ENCODE measurements at regions of chr1 and their contacts with region 1.

Region 1: DNA sequence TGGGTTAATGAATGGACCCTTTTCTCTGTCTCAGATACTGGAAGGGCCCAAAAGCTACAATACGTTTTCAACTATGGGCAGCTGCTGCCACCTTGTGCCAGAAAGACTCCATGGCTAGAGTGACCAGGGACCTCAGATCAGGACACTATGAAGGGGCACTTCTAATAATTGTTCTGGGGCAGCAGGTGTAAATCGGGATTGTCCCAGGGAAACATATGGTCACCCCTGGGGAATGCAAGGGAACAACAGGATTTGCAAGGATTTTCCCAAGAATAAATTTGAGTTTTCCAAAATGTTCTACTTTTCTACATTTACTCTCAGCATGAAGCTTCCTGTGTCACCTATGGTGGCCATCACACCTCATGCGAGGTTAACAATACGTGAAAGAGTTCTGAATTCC is 12.0 kb upstream of the FCAMR start:
- DNase-seq: peak; percentile 81
- H3K4me3 Mint-ChIP-seq: no peak overlapping the region
- H3K27ac Mint-ChIP-seq: no peak overlapping the region
- H3K4me1 Mint-ChIP-seq: no peaks in the 10 kb centered on the region
- H3K27me3 Mint-ChIP-seq: no peaks in the 10 kb centered on the region
- CTCF ChIP-seq: peak; percentile 99

Region 2: GRCh38 chr1:206489980-206490770 is 492.0 kb before region 1 on chr1:
- CTCF ChIA-PET with region 1: interaction called, 14 read pairs
- POLR2A ChIA-PET with region 1: no interaction called
- intact Hi-C with region 1: loop called (anchors 2 kb)
- DNase-seq: peak; percentile 89
- H3K4me3 Mint-ChIP-seq: no peak overlapping the region
- H3K27ac Mint-ChIP-seq: no peak overlapping the region
- H3K4me1 Mint-ChIP-seq: no peaks in the 10 kb centered on the region
- H3K27me3 Mint-ChIP-seq: no peaks in the 10 kb centered on the region
- CTCF ChIP-seq: peak; percentile 100

Region 3: GRCh38 chr1:206635080-206635977 is 346.9 kb before region 1 on chr1 and contains the start of gene DYRK3:
- CTCF ChIA-PET with region 1: interaction called, 80 read pairs
- POLR2A ChIA-PET with region 1: interaction called, 14 read pairs
- intact Hi-C with region 1: loop called (anchors 1 kb)
- DNase-seq: peak; percentile 99
- H3K4me3 Mint-ChIP-seq: peak within 1 kb of the TSS; percentile 89
- H3K27ac Mint-ChIP-seq: peak within 1 kb of the TSS; percentile 82
- H3K4me1 Mint-ChIP-seq: peaks cover 38% of the 10 kb centered on the region
- H3K27me3 Mint-ChIP-seq: no peaks in the 10 kb centered on the region
- CTCF ChIP-seq: no peak
- total RNA-seq, gene DYRK3: 45.4 and 58.5 TPM in 2 replicates

Region 4: GRCh38 chr1:206744683-206745082 is 237.5 kb before region 1 on chr1:
- CTCF ChIA-PET with region 1: interaction called, 18 read pairs
- POLR2A ChIA-PET with region 1: no interaction called
- intact Hi-C with region 1: no loop called
- DNase-seq: no peak
- H3K4me3 Mint-ChIP-seq: no peak overlapping the region
- H3K27ac Mint-ChIP-seq: no peak overlapping the region
- H3K4me1 Mint-ChIP-seq: peaks cover 5% of the 10 kb centered on the region
- H3K27me3 Mint-ChIP-seq: peaks cover 8% of the 10 kb centered on the region
- CTCF ChIP-seq: no peak

Region 5: GRCh38 chr1:206941858-206942387 is 40.3 kb before region 1 on chr1:
- CTCF ChIA-PET with region 1: interaction called, 74 read pairs
- POLR2A ChIA-PET with region 1: interaction called, 4 read pairs
- intact Hi-C with region 1: no loop called
- DNase-seq: no peak
- H3K4me3 Mint-ChIP-seq: no peak overlapping the region
- H3K27ac Mint-ChIP-seq: no peak overlapping the region
- H3K4me1 Mint-ChIP-seq: peaks cover 8% of the 10 kb centered on the region
- H3K27me3 Mint-ChIP-seq: peaks cover 39% of the 10 kb centered on the region
- CTCF ChIP-seq: no peak

Region 6: DNA sequence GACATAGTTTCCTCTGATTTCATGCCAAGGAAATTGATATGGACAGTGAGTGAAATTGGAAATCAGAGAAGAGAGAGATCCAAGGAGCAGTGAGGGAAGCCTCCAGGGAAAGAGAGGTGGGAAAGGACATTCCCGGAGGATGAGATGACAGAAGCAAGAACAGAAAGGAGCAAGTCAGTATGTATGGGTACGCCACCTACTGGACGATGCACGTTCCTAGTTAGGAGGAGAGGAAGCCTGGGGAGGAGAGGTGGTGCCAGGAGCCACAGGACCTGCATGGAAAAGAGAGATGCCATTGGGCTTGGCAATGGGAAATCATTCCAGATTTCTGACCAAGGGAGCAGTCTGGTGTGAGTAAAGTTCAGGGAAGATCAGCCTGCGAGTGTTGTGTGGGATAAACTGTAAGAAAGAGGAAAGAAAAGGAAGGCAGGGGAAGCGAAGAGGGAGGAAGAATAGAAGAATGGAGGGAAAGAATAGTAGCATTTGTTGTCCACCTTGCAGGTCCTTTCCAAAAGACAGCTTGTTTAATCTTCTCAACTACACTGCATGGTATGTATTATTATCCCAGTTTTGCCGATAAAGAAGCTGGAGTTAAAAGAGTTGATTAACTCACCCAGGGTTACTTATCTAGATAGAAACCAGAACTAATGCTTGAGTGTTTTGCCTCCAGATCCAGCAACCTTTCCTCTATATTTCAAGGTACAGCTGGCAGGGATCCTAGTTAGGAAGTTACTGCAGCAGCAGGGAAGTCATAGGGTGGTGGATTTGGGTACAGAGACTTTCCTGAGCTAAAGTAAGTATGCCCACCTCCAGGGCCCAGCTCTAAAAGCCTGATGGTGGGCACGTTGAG is 23.0 kb after region 1 on chr1:
- CTCF ChIA-PET with region 1: interaction called, 72 read pairs
- POLR2A ChIA-PET with region 1: interaction called, 10 read pairs
- intact Hi-C with region 1: no loop called
- DNase-seq: peak; percentile 95
- H3K4me3 Mint-ChIP-seq: peak overlapping the region; percentile 1
- H3K27ac Mint-ChIP-seq: peak overlapping the region; percentile 30
- H3K4me1 Mint-ChIP-seq: peaks cover 58% of the 10 kb centered on the region
- H3K27me3 Mint-ChIP-seq: no peaks in the 10 kb centered on the region
- CTCF ChIP-seq: peak; percentile 85

Measured in MCF 10A (cell line).